Sciatic nerve (tissue), 2 donors: ENCODE measurements at regions of chr1 and their contacts with region 1.

Region 1: GRCh38 chr1:30718636-30719405 is 4.6 kb downstream of the MATN1 start:
- DNase-seq: peak; percentile 94
- ATAC-seq: peak; percentile 87

Region 2: DNA sequence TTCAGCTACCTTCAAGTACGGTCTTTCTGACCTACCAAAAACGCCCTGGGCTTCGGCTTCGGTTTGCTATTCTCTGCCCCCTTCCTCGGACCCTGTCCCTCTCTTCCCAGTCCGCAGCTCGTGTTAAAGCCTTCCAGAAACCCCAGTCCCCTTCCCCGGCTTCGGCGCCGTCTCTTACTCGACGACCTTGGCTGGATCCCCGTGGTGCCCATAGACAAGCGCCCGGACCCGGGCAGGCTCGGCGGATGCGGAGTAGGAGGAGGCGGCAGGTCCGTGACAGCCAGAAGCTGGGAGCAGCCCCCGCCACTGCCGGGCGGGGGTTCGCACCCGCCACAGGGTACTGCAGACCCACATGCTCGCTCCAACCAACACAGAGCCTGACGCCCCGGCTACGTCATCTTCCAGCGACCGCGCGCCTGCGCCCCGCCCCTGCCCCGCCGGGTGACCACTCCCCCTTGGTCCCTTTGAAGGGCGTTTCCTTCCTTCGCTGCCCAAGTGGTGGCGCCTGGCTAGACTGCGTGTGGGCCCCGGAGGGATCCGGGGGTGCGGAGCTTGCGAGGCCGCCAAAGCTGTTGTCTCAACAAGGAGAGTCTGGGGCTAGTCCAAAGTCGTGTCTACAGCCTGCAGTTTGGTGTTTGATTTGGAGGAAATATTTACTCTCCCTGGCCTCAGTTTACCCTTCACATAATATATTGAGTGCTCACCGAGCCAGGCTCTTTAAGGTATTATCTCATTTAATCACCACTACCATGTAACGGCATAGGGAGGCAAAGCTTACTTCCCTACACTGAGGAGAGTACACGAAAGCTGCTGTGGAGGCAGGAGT is 1488.1 kb before region 1 on chr1 and contains the start of gene MECR:
- intact Hi-C with region 1: loop called (anchors 5 kb)
- DNase-seq: peak; percentile 96
- ATAC-seq: peak; percentile 99
- total RNA-seq, gene MECR: 22.6 TPM

Region 3: GRCh38 chr1:30632481-30632880 is 86.3 kb before region 1 on chr1:
- intact Hi-C with region 1: no loop called
- DNase-seq: no peak
- ATAC-seq: no peak

Region 4: GRCh38 chr1:30779294-30780071 is 60.7 kb after region 1 on chr1:
- intact Hi-C with region 1: loop called (anchors 2 kb)
- DNase-seq: peak; percentile 93
- ATAC-seq: peak; percentile 76

Region 5: DNA sequence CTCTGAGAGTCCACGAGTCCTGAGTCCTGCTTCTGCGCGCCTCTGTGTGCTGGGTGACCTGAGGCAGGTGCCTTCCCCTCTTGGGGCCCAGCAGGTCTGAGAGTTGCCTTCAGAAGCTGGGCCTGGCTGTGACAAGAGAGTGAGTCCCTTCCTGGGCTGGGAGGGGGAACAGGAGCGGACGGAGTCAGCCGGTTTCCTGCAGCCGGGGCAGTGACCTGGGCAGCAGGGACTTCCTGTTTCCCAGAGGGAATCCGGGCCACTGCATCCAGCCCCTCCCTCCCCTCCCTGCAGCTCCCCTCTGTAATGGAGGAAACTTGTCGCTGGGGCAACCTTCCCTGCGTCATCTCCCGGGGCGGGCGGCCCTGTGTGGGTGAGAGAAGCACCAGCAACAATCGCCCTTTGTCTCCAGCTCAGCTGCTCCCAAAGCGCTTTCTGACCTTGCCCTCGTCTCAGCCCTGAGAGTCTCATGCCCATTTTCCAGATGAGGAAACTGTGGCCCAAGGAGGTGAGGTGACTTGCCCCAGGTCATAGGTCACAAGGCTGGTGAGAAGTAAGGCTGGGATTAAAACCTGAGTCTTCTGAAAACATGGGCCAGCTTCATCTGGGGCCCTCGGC is 128.6 kb after region 1 on chr1:
- intact Hi-C with region 1: no loop called
- DNase-seq: peak; percentile 91
- ATAC-seq: peak; percentile 94

Region 6: GRCh38 chr1:30911046-30911954 is 192.5 kb after region 1 on chr1:
- intact Hi-C with region 1: loop called (anchors 5 kb)
- DNase-seq: peak; percentile 95
- ATAC-seq: peak; percentile 84